ENCODE measurements at regions of chr11 and their contacts with region 1.

Region 1: GRCh38 chr11:85826116-85826855 is 15.3 kb upstream of the SYTL2 start:
- DNase-seq: peak; percentile 48
- ATAC-seq: no peak
- H3K4me3 Mint-ChIP-seq: no peak overlapping the region
- H3K27ac Mint-ChIP-seq: peak overlapping the region; percentile 11
- H3K4me1 Mint-ChIP-seq: peaks cover 65% of the 10 kb centered on the region
- H3K27me3 Mint-ChIP-seq: no peaks in the 10 kb centered on the region

Region 2: GRCh38 chr11:85699957-85700741 is 126.1 kb before region 1 on chr11:
- CTCF ChIA-PET with region 1: interaction called, 3 read pairs
- POLR2A ChIA-PET with region 1: no interaction called
- intact Hi-C with region 1: loop called (anchors 5 kb)
- DNase-seq: no peak
- ATAC-seq: peak; percentile 49
- H3K4me3 Mint-ChIP-seq: peak overlapping the region; percentile 31
- H3K27ac Mint-ChIP-seq: peak overlapping the region; percentile 87
- H3K4me1 Mint-ChIP-seq: peaks cover 33% of the 10 kb centered on the region
- H3K27me3 Mint-ChIP-seq: no peaks in the 10 kb centered on the region

Region 3: DNA sequence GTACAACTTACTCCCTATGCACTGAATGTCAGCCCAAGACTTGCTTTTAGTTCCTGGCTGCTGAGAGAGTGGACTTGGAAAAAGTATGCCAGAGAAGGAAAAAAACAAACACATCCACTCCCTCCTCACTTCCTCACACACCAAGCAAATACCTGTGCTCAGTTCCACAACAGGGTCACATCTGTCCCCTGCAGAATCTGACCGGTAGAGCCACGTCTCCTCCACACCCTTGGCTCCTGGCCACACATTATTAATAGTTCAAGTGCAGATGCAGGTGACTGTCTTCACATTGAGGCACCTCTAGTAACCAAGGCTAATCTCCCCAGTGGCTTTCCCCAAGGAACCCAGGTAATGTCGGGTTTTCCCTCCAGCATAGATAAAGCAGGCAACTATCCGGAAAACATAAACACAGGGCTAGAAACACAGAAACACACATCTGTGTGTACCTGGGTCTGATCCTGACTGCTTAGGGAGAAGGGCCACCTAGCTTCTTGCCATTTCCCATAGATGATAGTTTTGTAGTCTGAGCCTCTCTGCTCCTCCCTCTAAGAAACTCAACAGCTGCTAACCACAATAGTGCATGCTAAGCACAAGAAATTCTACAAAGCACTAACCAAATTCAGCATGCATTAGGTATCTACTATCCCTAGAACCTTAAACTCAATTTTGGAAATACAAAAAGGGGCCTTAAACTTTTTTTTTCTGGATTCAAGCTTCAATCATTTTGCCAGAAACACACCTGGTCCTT is 25.5 kb before region 1 on chr11:
- CTCF ChIA-PET with region 1: no interaction called
- POLR2A ChIA-PET with region 1: no interaction called
- intact Hi-C with region 1: no loop called
- DNase-seq: no peak
- ATAC-seq: no peak
- H3K4me3 Mint-ChIP-seq: no peak overlapping the region
- H3K27ac Mint-ChIP-seq: no peak overlapping the region
- H3K4me1 Mint-ChIP-seq: peaks cover 20% of the 10 kb centered on the region
- H3K27me3 Mint-ChIP-seq: no peaks in the 10 kb centered on the region

Region 4: DNA sequence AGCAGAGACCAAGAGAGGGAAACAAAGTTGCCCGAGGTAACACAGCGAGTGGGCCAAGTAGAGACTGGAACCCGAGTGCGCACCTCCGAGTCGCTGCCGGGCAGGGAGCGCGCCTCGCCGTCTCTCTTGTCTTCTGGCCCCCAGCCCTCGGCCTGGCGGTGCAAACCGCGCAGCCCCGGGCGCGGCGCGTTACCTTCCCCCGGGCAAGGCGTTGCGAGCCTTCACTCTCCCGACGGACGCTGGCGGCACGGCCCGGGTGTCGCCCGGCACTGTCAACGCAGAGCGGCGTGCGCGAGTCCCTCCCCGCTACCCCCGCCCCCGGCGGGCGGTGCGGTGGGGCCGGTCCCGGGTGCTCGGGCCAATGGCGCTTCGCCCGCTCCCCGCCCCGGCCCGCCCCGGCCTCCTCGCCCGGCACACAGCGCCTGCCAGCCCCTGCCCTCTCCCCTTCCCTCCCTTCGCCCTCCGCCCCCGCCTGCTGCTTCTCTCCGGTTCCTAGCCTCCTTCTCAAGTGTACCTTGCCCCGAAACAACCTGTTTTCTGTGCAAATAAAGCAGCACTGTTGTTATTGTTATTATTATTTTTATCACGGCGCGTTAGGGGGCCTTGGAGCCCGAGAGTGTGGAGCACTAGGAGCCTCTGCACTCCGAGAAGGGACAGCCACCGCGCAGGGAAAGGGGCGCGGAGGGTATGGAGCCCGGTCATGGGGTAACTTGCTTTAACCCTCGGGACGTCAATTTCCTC is 15.2 kb before region 1 on chr11 and contains the start of gene SYTL2:
- CTCF ChIA-PET with region 1: interaction called, 6 read pairs
- POLR2A ChIA-PET with region 1: no interaction called
- intact Hi-C with region 1: loop called (anchors 1 to 2 kb)
- DNase-seq: peak; percentile 84
- ATAC-seq: peak; percentile 95
- H3K4me3 Mint-ChIP-seq: peak within 1 kb of the TSS; percentile 73
- H3K27ac Mint-ChIP-seq: peak within 1 kb of the TSS; percentile 63
- H3K4me1 Mint-ChIP-seq: peaks cover 33% of the 10 kb centered on the region
- H3K27me3 Mint-ChIP-seq: peaks cover 8% of the 10 kb centered on the region
- total RNA-seq, gene SYTL2: 5.2 to 6.8 TPM

Region 5: GRCh38 chr11:85955531-85955930 is 129.2 kb after region 1 on chr11:
- CTCF ChIA-PET with region 1: no interaction called
- POLR2A ChIA-PET with region 1: no interaction called
- intact Hi-C with region 1: no loop called
- DNase-seq: no peak
- ATAC-seq: no peak
- H3K4me3 Mint-ChIP-seq: no peak overlapping the region
- H3K27ac Mint-ChIP-seq: no peak overlapping the region
- H3K4me1 Mint-ChIP-seq: peaks cover 5% of the 10 kb centered on the region
- H3K27me3 Mint-ChIP-seq: no peaks in the 10 kb centered on the region